MCF 10A (cell line): ENCODE measurements at regions of chrX and their contacts with region 1.

Region 1: DNA sequence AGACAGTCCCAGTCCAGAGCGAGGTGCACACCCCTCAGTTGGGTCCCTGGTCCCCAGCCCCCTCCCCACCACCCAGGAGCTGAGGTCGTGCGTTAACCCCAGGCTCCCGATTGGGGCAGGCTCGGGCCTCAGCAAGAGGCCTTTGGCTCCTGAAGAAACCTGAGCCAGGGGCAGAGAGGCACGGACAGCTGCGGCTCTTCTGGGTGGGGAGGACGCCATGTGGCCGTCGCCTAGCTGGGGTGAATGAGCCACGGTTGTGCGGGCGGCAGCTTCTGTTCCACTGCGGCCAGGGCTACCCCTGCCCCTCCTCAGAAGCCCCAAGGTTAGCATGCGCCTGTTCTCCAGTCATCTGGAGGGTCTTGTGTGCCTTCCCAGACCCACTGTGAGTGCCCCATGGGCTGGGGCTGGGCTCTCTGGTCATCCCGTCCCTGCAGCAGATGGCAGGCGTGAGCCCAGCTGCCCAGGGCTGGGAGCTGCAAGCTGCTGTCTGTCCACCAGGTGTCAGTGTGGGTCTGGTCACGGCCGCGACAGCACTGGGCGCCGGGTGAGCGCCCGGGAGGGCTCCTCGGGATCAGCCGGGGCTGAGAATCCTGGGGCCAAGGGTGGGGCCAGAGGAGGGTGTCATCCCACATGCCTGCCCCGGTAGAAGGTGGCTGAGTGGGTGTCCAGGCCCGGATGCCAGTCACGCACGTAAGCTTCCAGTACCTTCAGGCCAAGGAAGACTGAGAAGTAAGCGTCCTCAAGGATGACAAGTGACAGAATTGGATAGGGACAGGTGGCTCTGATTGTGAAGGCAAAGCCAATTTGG is 21.9 kb downstream of the ATP2B3 start:
- DNase-seq: peak; percentile 55
- H3K4me3 Mint-ChIP-seq: no peak overlapping the region
- H3K27ac Mint-ChIP-seq: no peak overlapping the region
- H3K4me1 Mint-ChIP-seq: no peaks in the 10 kb centered on the region
- H3K27me3 Mint-ChIP-seq: no peaks in the 10 kb centered on the region
- CTCF ChIP-seq: peak; percentile 74

Region 2: GRCh38 chrX:153333768-153334645 is 205.4 kb before region 1 on chrX and contains the start of gene ZNF275:
- CTCF ChIA-PET with region 1: no interaction called
- POLR2A ChIA-PET with region 1: no interaction called
- intact Hi-C with region 1: no loop called
- DNase-seq: peak; percentile 69
- H3K4me3 Mint-ChIP-seq: peak within 1 kb of the TSS; percentile 74
- H3K27ac Mint-ChIP-seq: peak within 1 kb of the TSS; percentile 90
- H3K4me1 Mint-ChIP-seq: peaks cover 6% of the 10 kb centered on the region
- H3K27me3 Mint-ChIP-seq: no peaks in the 10 kb centered on the region
- CTCF ChIP-seq: no peak
- total RNA-seq, gene ZNF275: 9.8 and 10.7 TPM in 2 replicates

Region 3: GRCh38 chrX:153554519-153555167 is 15.3 kb after region 1 on chrX:
- CTCF ChIA-PET with region 1: interaction called, 11 read pairs
- POLR2A ChIA-PET with region 1: no interaction called
- intact Hi-C with region 1: no loop called
- DNase-seq: peak; percentile 61
- H3K4me3 Mint-ChIP-seq: no peak overlapping the region
- H3K27ac Mint-ChIP-seq: no peak overlapping the region
- H3K4me1 Mint-ChIP-seq: no peaks in the 10 kb centered on the region
- H3K27me3 Mint-ChIP-seq: no peaks in the 10 kb centered on the region
- CTCF ChIP-seq: peak; percentile 53